ENCODE measurements at regions of chr4 and their contacts with region 1.

Region 1: DNA sequence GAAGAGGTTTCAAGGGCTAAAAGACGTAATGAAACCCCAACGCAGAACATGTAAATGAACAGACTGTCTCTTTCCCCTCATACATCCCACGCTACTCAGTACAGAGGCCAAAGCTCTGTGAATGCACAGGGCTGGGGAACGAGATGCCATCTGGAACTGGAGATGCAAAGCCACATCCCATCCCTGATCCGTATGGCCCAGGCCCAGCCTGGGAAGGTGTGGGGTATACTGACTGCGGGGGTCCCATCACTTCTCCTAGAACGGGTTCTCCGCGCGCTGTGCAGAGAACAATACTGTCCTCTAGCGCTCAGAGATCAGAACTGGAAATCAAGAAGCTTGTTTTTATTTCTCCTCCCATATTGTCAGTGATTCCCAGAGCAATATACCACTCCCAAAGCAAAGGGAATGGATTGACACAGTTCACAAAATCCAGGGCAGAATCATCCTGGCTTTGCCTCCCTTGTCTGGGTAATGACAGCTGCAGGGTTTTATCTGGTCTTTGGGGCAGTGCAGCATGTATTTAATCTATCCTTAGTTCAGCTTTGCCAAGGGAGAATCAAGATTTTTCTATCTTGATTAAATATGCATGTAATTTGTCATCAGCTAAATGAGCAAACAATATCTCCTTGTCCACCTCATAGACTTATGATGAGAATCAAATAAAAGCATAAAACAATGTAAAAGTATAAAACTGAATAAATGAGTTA is 47.3 kb upstream of the TLR3 start:
- DNase-seq: peak; percentile 52
- H3K4me3 ChIP-seq: no peak overlapping the region
- H3K27ac ChIP-seq: no peak overlapping the region
- H3K4me1 ChIP-seq: no peaks in the 10 kb centered on the region
- H3K27me3 ChIP-seq: no peaks in the 10 kb centered on the region
- CTCF ChIP-seq: peak; percentile 73

Region 2: GRCh38 chr4:185640811-185641675 is 380.6 kb before region 1 on chr4:
- CTCF ChIA-PET with region 1: interaction called, 40 read pairs
- POLR2A ChIA-PET with region 1: no interaction called
- intact Hi-C with region 1: loop called (anchors 2 kb)
- DNase-seq: peak; percentile 69
- H3K4me3 ChIP-seq: no peak overlapping the region
- H3K27ac ChIP-seq: no peak overlapping the region
- H3K4me1 ChIP-seq: no peaks in the 10 kb centered on the region
- H3K27me3 ChIP-seq: peaks cover 11% of the 10 kb centered on the region
- CTCF ChIP-seq: peak; percentile 60